GM13977 (cell line): ENCODE measurements at regions of chr22 and their contacts with region 1.

Region 1: GRCh38 chr22:32080904-32081303 is 37.8 kb downstream of the SLC5A1 start:
- DNase-seq: peak; percentile 67
- CTCF ChIP-seq: peak; percentile 74

Region 2: GRCh38 chr22:31262312-31263080 is 818.4 kb before region 1 on chr22:
- in situ Hi-C with region 1: no loop called
- DNase-seq: no peak
- CTCF ChIP-seq: no peak

Region 3: DNA sequence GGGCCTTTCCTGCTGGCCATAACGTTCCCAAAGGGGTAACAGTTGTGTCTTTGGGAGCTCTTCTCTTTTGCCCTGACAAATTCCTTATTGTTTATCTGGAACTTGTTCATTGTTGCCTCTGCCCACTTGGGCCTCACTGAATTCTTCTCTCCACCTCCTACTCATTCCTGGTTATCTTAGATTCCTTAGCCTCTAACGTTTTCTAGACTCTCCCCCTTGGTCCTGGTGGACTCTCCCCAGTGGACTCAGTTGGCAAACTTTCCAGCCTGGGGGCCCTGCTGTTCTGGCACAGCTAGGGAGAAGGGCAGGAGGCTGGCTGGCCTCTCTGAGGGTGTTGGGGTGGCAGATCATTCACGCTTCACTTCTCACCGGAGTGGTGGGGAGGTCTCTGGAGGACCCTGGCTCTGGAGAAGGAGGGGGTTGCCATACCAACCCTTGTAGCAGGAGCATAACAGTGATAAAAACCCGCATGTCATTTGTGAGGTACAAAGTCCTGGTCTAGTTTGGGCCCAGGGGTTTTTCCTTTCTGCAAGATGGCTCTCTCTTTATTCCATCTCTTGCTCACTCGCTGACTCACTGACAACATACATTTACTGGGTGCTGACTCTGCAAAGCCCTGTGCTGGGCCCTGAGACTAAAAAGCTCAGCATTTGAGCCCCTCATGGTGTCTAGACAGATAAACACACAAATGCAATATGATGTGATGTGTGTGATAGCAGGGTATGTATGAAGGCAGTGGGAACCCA is 96.8 kb before region 1 on chr22:
- in situ Hi-C with region 1: loop called (anchors 10 kb)
- DNase-seq: no peak
- CTCF ChIP-seq: no peak